PC-9 (cell line): ENCODE measurements at regions of chr17 and their contacts with region 1.

Region 1: DNA sequence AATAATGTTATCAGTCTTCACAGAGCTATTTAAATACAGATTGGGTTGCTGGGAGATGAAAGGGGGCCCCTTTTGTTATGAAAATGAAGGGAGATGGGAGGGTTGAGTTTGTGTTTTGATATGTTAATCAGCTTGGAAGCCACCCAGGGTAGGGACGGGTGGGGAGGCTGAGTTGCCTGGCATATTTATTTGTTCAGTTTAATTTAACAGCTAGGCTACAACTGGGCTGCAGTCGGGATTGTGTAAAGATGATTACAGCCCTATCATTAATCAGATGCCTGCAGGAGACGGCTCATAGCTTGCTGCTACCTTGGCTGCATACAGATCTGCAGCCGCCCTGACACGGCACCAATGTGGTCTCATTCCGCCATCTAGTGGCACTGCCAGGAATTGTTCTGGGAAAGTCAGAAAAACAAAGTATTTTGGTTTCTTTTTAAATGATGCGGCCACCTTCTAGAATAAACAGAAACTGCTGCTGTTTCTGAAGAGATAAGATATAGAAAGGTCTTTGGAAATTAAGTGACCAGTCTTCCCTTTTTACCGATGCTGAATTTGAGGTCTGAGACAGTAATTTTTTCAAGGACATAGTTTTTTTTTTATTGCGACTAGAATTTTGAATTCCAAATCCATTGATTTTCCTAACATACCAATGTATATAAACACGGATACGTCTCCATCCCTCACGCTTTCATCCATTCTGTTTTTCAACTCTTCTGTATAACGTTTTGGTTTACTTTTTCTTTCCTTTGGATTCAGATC is 458.0 kb upstream of the ASIC2 start:
- DNase-seq: peak in 1 of 2 experiments; percentile 56
- H3K4me3 ChIP-seq: no peak overlapping the region
- H3K27ac ChIP-seq: no peak overlapping the region
- H3K4me1 ChIP-seq: no peaks in the 10 kb centered on the region
- H3K27me3 ChIP-seq: peaks cover 19% of the 10 kb centered on the region; the same call in 1 of the 2 replicates
- CTCF ChIP-seq: peak; percentile 85

Region 2: GRCh38 chr17:32461853-32462617 is 1289.1 kb before region 1 on chr17:
- CTCF ChIA-PET with region 1: no interaction called
- POLR2A ChIA-PET with region 1: no interaction called
- intact Hi-C with region 1: loop called (anchors 5 kb)
- DNase-seq: peak in 1 of 2 experiments; percentile 41
- H3K4me3 ChIP-seq: no peak overlapping the region
- H3K27ac ChIP-seq: no peak overlapping the region
- H3K4me1 ChIP-seq: no peaks in the 10 kb centered on the region
- H3K27me3 ChIP-seq: no peaks in the 10 kb centered on the region
- CTCF ChIP-seq: peak; percentile 65

Region 3: GRCh38 chr17:33642002-33642401 is 109.1 kb before region 1 on chr17:
- CTCF ChIA-PET with region 1: no interaction called
- POLR2A ChIA-PET with region 1: no interaction called
- intact Hi-C with region 1: loop called (anchors 5 kb)
- DNase-seq: no peak
- H3K4me3 ChIP-seq: no peak overlapping the region
- H3K27ac ChIP-seq: no peak overlapping the region
- H3K4me1 ChIP-seq: no peaks in the 10 kb centered on the region
- H3K27me3 ChIP-seq: 0 out of 2 replicates have a peak, but pooled peaks cover 9% of the 10 kb centered on the region
- CTCF ChIP-seq: no peak